ENCODE measurements at regions of chr2 and their contacts with region 1.

Region 1: GRCh38 chr2:217886720-217887309 is 116.0 kb downstream of the TNS1 start:
- DNase-seq: peak; percentile 73
- H3K4me3 ChIP-seq: no peak overlapping the region
- H3K27ac ChIP-seq: no peak overlapping the region
- H3K4me1 ChIP-seq: no peaks in the 10 kb centered on the region
- H3K27me3 ChIP-seq: no peaks in the 10 kb centered on the region
- CTCF ChIP-seq: peak; percentile 66

Region 2: GRCh38 chr2:217988014-217988839 is 101.4 kb after region 1 on chr2:
- intact Hi-C with region 1: loop called (anchors 5 kb)
- DNase-seq: peak; percentile 86
- H3K4me3 ChIP-seq: no peak overlapping the region
- H3K27ac ChIP-seq: no peak overlapping the region
- H3K4me1 ChIP-seq: no peaks in the 10 kb centered on the region
- H3K27me3 ChIP-seq: no peaks in the 10 kb centered on the region
- CTCF ChIP-seq: peak; percentile 83